ENCODE measurements at regions of chr6 and their contacts with region 1.

Region 1: GRCh38 chr6:37102279-37103168 is 67.4 kb upstream of the PIM1 start:
- DNase-seq: peak; percentile 71
- H3K4me3 Mint-ChIP-seq: peak overlapping the region; percentile 58
- H3K27ac Mint-ChIP-seq: peak overlapping the region; percentile 59
- H3K4me1 Mint-ChIP-seq: peaks cover 54% of the 10 kb centered on the region
- H3K27me3 Mint-ChIP-seq: no peaks in the 10 kb centered on the region

Region 2: DNA sequence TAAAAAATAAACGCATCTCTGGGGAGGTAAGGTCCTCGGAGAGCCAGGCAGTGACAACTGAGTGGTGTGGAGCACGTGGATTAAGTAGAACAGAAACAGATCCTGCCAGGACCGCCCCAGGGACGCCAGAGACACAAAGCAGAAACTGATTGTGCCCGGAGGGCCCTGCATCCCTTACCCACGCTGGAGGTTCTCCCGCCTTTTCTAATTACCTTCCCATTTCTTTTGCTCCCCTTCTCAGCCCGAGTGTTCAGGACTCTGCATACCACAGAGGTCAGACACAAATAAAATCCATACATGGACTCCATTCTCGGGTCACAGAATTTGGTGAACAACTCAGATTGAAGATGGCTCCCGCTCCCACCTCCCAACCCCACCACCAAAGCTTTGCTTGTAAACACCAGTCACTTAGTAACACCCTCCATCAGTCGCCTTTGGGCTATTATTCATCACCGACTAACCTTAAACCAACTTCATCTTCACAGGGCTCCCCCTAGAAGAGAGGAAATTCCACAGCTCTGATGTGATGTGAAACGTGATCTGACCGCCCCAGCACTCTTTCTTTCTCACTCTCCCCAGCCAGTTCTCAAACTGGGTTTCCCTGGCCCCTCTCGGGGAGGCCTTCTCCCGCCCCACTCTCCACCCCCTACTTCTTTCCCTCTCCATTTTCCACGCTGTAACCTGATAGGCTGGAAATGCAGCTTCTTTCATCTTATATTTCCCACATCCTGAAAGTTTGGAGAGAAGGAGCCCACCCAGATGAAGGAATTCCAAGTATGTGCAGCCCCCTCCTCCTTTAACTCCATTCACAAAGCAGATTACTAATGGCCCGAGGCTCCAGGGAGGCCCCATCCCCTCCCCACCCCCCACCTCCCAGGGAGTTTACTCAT is 34.9 kb after region 1 on chr6:
- CTCF ChIA-PET with region 1: interaction called, 3 read pairs
- POLR2A ChIA-PET with region 1: interaction called, 12 read pairs
- DNase-seq: peak; percentile 37
- H3K4me3 Mint-ChIP-seq: peak overlapping the region; percentile 51
- H3K27ac Mint-ChIP-seq: peak overlapping the region; percentile 72
- H3K4me1 Mint-ChIP-seq: peaks cover 61% of the 10 kb centered on the region
- H3K27me3 Mint-ChIP-seq: no peaks in the 10 kb centered on the region